Colonic mucosa (tissue), 4 donors: ENCODE measurements at regions of chrX and their contacts with region 1.

Region 1: GRCh38 chrX:109336141-109336540 is 145.7 kb downstream of the GUCY2F start:
- DNase-seq: no peak
- H3K4me3 ChIP-seq: no peak overlapping the region
- H3K27ac ChIP-seq: no peak overlapping the region
- H3K4me1 ChIP-seq: no peaks in the 10 kb centered on the region
- H3K27me3 ChIP-seq: no peaks in the 10 kb centered on the region
- CTCF ChIP-seq: no peak

Region 2: DNA sequence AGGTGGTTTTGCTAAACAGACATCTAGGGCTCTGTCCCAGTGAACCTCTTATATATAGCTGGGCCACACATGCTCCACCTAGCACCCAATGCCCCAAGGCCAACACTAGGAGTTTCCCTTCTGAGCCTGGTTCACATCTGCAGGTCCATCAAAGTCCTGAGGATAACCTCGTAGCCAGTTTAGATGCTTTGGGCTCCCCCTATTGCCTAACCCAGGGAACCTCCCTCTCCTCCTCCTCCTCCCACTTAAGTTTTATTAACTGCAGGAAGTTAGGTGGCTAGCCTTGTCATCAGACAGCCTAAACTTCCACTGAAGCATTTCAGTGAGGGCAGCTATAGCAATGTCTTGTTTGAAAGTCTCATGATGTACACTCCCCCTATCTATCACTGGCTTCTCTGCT is 57.7 kb after region 1 on chrX:
- intact Hi-C with region 1: loop called (anchors 10 kb)
- DNase-seq: no peak
- H3K4me3 ChIP-seq: no peak overlapping the region
- H3K27ac ChIP-seq: no peak overlapping the region
- H3K4me1 ChIP-seq: no peaks in the 10 kb centered on the region
- H3K27me3 ChIP-seq: no peaks in the 10 kb centered on the region
- CTCF ChIP-seq: no peak

Region 3: GRCh38 chrX:109485470-109486340 is 149.6 kb after region 1 on chrX:
- intact Hi-C with region 1: no loop called
- DNase-seq: peak; percentile 64
- H3K4me3 ChIP-seq: no peak overlapping the region
- H3K27ac ChIP-seq: no peak overlapping the region
- H3K4me1 ChIP-seq: no peaks in the 10 kb centered on the region
- H3K27me3 ChIP-seq: no peaks in the 10 kb centered on the region
- CTCF ChIP-seq: peak; percentile 96

Region 4: DNA sequence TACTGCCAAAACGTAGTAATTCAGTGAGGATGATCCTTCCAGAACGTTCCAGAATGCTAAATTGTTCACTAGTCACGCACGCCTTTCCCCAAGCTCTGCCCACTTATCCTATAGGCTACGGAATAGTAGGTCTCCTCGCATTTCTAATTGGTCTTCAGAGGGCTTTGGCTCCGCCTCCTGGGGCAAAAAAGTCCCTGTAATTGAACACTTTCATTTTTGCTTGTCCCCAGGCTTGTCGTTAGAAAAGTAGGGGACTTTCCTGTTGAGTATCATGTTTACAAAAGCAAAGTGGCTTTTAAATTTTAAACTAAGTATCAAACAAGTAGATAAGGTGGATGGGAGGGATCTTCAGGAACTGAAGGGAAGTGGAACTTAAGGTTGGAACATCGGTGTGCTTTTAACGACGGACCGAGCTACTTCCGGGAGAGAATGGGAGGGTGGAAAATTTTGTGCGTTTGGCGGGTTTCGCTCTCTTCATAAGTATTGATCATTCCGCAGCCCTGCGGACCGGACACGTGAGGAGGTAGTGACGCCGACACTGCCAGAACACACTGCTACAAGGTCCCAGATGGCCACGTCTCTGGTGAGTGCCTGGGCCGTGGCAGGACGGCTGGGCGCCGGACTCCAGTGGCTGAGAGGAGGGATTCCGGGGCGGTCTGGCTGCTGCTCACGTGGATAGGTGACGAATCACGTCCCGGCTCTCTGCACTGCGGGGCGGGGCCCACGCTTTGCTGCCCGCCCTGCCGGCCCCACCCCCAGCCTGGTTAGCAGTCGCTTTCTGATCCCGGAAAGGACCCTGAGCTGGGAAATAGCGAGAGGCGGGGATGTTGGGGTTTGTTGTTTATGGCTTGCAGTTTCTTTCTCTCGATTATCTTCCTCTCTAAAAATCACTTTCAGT is 200.5 kb after region 1 on chrX and contains the start of gene NXT2:
- intact Hi-C with region 1: no loop called
- DNase-seq: peak; percentile 88
- H3K4me3 ChIP-seq: peak within 1 kb of the TSS; percentile 34
- H3K27ac ChIP-seq: peak within 1 kb of the TSS; percentile 77
- H3K4me1 ChIP-seq: no peaks in the 10 kb centered on the region
- H3K27me3 ChIP-seq: no peaks in the 10 kb centered on the region
- CTCF ChIP-seq: no peak
- total RNA-seq, gene NXT2: 7.4 to 8.4 TPM

Region 5: DNA sequence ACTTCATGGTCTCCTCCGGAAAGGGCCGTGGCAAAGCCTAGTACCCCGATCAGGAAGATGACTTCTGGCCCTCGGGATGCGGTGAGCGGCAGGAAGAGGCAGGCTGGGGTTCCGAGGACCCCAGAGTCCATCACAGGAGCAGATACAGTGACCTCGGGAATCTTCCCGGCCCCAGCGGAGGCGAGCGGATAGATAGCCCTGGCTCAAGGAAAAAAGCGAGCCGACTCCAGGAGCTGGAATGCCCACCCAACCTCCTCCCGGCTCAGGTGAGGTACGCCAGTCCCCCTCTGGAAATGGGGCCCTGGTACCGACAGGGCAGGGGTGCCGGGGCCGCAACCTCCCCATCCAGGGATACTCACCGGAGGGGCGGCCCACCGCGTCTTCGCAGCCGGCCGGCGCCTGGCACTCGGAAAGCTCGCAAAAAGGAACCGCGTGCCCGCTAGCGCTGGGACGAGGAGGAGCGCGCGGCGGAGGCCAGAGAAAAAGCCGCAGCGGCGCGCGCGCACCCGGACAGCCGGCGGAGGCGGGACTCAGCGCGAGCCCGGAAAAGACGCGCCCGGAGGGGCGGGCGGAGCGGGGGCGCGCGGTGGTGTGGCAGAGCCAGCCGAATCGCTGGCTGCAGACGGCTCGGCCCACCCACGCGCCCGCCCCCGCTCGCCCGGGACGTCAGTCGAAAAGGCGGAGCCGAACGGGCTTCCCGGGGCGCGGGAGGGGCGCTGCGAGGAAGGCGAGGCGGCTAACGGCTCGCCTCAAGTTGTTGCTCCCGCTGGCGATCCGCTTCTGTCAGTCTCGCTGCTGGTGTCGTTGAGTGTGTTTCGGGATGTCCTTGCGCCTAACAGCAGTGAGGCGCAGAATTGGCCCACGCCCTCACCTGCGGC is 396.9 kb after region 1 on chrX and contains the start of gene ACSL4:
- intact Hi-C with region 1: no loop called
- DNase-seq: peak; percentile 84
- H3K4me3 ChIP-seq: peak within 1 kb of the TSS; percentile 54
- H3K27ac ChIP-seq: peak within 1 kb of the TSS; percentile 77
- H3K4me1 ChIP-seq: no peaks in the 10 kb centered on the region
- H3K27me3 ChIP-seq: no peaks in the 10 kb centered on the region
- CTCF ChIP-seq: no peak
- total RNA-seq, gene ACSL4: 10.6 to 27.9 TPM